Sigmoid colon (tissue), 7 donors: ENCODE measurements at regions of chr1 and their contacts with region 1.

Region 1: GRCh38 chr1:155277070-155277895 is at the start of gene HCN3:
- DNase-seq: peak; percentile 99
- H3K4me3 ChIP-seq: peak within 1 kb of the TSS; percentile 55 to 86 (median 68)
- H3K27ac ChIP-seq: peak within 1 kb of the TSS; percentile 70 to 79 (median 77)
- H3K4me1 ChIP-seq: peaks cover 0 to 29% (median 23%) of the 10 kb centered on the region in 4 donors
- H3K27me3 ChIP-seq: no peaks in the 10 kb centered on the region
- CTCF ChIP-seq: peak in 2 of 4 experiments; percentile 21 to 61
- EP300 ChIP-seq: no peak
- POLR2A ChIP-seq: no peak
- total RNA-seq, gene HCN3: 1.2 to 5.5 (median 2.3) TPM

Region 2: GRCh38 chr1:155308493-155309422 is 31.5 kb after region 1 on chr1 and contains the start of gene FDPS:
- intact Hi-C with region 1: loop called (anchors 2 kb)
- DNase-seq: peak; percentile 100
- H3K4me3 ChIP-seq: peak within 1 kb of the TSS; percentile 57 to 89 (median 78)
- H3K27ac ChIP-seq: peak within 1 kb of the TSS; percentile 88 to 91 (median 90)
- H3K4me1 ChIP-seq: peaks cover 0 to 26% (median 19%) of the 10 kb centered on the region in 4 donors
- H3K27me3 ChIP-seq: no peaks in the 10 kb centered on the region
- CTCF ChIP-seq: peak in 2 of 4 experiments; percentile 18 to 29
- EP300 ChIP-seq: no peak
- POLR2A ChIP-seq: peak; percentile 31 to 66
- total RNA-seq, gene FDPS: 73.7 to 96.8 (median 81.3) TPM

Region 3: DNA sequence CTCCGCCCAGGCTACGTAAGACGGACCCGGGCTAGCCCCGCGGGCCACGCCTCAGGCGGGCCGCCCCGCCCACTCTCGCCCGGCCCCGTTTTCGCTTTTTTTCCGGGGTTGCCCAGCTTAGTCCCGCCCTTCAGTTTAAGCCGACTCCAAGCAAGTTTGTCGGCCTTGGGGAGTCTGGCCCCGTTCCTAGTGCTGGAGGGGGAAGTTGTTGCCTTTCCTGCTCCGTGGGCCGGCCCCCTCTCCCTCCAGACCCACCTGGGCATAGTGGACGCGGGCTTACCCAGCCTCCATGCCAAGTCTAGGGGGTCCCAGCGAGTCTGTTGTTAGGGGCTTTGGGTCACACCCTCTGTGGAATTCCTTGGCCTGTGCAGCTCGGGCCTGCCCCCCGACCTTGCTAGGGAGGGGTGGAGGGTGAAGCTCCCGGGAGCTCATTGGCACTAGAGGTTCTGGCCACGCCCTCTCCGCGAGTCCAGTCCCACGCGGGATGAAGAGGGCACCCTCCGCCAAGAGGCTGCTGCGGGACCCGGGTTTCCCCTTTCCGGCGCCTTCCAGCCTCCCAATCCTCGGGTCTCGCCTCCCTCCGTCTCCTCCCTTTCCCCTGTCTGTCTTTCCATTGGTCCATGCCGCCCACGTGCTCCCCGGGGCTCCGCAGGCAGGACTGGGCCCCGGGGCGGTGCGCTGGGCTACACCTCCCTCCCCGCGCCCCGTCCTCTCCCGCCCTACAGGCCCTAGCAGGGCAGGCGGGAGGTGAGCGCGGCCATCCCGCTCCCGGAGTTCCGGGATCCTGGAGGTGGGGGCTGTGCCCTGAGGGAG is 46.7 kb after region 1 on chr1:
- intact Hi-C with region 1: loop called (anchors 1 kb)
- DNase-seq: peak; percentile 98
- H3K4me3 ChIP-seq: peak overlapping the region; percentile 66 to 91 (median 86)
- H3K27ac ChIP-seq: peak overlapping the region; percentile 95 to 100 (median 98)
- H3K4me1 ChIP-seq: peaks cover 0 to 51% (median 38%) of the 10 kb centered on the region in 4 donors
- H3K27me3 ChIP-seq: no peaks in the 10 kb centered on the region
- CTCF ChIP-seq: no peak
- EP300 ChIP-seq: peak in 1 of 4 donors; percentile 11
- POLR2A ChIP-seq: peak; percentile 54 to 94

Region 4: GRCh38 chr1:155591770-155592169 is 314.5 kb after region 1 on chr1:
- intact Hi-C with region 1: loop called (anchors 5 kb)
- DNase-seq: no peak
- H3K4me3 ChIP-seq: no peak overlapping the region
- H3K27ac ChIP-seq: no peak overlapping the region
- H3K4me1 ChIP-seq: peaks cover 0 to 3% (median 0%) of the 10 kb centered on the region in 4 donors
- H3K27me3 ChIP-seq: no peaks in the 10 kb centered on the region
- CTCF ChIP-seq: peak; percentile 17 to 48 (median 38)
- EP300 ChIP-seq: no peak
- POLR2A ChIP-seq: no peak